ENCODE measurements at regions of chr19 and their contacts with region 1.

Region 1: DNA sequence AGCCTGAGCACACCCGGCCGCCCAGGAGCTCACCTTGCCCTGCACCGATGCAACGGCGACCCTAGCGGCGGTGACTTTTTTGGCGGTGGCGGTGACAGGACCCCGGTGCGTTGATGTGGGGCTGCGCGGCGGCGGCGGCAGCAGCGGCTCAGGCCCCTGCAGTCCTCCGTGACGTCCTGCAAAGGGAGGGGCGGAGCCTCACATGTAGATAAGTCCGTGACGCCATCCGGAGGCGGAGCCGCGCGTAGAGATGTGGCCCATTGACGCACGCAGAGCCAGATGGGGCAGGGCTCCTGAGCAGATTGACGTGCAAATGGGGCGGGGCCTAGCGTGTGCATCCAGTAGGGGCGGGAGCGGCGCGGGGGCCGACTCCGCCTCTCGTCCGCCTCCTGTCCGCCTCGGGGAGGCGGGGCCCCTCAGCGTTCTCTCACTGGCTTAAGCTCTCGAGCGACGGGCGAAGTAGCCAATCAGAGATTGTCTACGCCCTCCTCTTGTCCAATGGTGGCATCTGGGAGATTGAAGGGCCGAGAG is at the start of gene RAB3A:
- DNase-seq: peak; percentile 100
- H3K4me3 ChIP-seq: peak within 1 kb of the TSS; percentile 93
- H3K27ac ChIP-seq: peak within 1 kb of the TSS; percentile 100
- H3K27me3 ChIP-seq: no peaks in the 10 kb centered on the region
- CTCF ChIP-seq: no peak
- polyA plus RNA-seq, gene RAB3A: 2.8 and 6.1 TPM in 2 replicates

Region 2: GRCh38 chr19:18192673-18193387 is 11.1 kb before region 1 on chr19 and contains the start of gene MPV17L2:
- CTCF ChIA-PET with region 1: interaction called, 13 read pairs
- POLR2A ChIA-PET with region 1: interaction called, 30 read pairs
- DNase-seq: peak; percentile 100
- H3K4me3 ChIP-seq: peak within 1 kb of the TSS; percentile 84
- H3K27ac ChIP-seq: peak within 1 kb of the TSS; percentile 90
- H3K27me3 ChIP-seq: no peaks in the 10 kb centered on the region
- CTCF ChIP-seq: no peak
- polyA plus RNA-seq, gene MPV17L2: 8.2 and 13.4 TPM in 2 replicates

Region 3: GRCh38 chr19:18224525-18225354 is 20.8 kb after region 1 on chr19:
- CTCF ChIA-PET with region 1: interaction called, 19 read pairs
- POLR2A ChIA-PET with region 1: interaction called, 10 read pairs
- DNase-seq: peak; percentile 99
- H3K4me3 ChIP-seq: peak overlapping the region; percentile 64
- H3K27ac ChIP-seq: peak overlapping the region; percentile 21
- H3K27me3 ChIP-seq: peaks cover 5% of the 10 kb centered on the region
- CTCF ChIP-seq: no peak

Measured in AG04450 (cell line).